KBM-7 (cell line): ENCODE measurements at regions of chr22 and their contacts with region 1.

Region 1: DNA sequence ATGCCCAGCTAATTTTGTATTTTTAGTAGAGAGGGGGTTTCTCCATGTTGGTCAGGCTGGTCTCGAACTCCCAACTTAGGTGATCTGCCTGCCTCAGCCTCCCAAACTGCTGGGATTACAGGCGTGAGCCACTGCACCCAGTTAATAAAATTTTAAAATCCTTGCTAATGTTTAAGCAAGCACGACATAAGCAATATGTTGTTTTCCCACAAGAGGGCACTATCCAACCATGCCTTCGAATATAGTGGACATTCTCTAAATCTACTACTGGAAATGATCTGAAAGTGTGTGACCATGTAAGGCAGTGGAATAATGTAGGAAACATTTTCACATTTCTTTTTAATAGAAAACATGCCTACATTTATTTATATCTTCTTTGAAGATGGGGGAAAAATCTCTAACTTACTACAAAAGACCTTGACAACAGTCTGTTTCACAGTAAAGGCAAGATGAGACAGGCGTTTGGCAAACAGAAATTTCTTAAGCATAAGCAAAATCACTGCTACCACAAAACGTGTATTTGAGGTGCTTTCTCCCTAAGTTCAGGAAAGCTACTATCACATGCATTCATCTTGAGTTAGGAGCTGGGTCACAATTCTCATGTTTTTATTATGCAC is 38.2 kb downstream of the PITPNB start:
- DNase-seq: peak; percentile 69

Region 2: DNA sequence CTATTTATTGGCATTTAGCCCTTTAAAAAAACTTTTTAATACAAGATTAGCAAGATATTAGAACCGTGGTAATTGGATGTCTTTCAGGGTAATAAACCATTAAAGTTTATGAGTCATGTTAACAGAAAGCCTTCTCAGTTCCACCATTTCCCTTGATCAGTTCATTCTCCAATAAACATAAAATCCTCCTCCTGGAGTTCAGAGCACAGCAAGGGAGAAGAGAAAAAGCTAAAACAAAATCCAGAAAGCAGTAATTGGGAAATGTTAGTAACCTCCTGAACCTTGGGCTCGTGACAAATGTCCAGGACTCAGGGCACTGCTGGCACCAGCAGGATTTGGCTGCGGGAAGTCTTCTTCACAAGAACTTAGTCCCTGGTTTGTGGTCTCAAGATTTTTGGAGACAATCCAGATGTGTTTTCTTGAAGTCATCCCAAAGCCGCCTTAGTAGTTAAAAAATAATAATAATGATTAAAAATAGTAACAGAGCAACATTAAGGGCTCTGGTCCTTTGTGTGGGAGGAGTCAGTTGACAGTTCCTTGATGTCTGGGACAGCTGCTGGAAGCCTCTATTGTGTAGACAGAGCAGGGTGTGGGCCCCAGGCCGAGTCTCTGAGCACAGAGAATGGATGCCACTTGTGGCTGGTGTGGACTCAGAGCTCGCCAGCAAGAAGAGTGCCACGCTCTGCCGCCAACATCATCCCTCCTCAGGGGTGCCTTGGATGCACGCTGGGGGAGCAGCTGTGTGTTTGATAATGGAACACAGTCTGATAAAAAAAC is 81.6 kb after region 1 on chr22:
- in situ Hi-C with region 1: no loop called
- DNase-seq: no peak

Region 3: GRCh38 chr22:28594797-28595462 is 714.0 kb after region 1 on chr22:
- in situ Hi-C with region 1: loop called (anchors 25 kb)
- DNase-seq: peak; percentile 61